CD14-positive monocyte (primary cell): ENCODE measurements at regions of chr5 and their contacts with region 1.

Region 1: DNA sequence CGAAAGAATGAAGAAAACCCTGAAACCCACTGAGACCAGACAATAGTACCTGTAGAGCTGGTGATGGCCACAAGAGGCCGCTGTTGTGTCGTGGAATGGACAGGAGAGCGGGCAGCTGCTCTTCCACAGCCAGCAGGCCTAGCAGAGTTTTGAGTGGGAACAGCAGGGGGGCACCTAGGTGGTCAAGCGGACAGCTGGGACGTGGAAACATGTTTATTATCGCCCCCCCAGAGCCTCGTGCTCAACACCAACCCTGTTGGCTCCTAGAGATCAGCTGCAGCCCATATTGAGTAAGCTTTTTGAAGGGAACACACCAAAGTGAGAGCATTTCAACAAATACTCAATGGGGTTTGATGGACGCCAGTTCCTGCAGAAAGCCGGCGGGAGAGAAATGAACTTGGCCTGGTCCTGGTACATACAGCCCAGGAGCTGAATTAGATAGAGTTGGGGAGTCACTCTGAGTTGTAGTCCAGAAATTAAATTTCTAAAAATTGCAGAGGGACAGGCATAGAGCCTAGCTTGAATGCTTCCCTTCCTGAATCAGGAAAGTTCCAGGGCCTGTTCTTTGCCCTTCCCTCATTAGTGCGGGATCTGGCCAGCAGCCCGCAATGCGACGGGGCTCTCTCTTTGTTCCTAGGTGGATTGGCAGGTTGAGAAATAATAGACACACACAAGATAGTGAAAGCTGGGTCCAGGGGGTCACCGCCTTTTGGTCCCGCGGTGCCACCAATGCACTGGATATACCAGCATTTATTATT is 33.8 kb downstream of the MFAP3 start:
- DNase-seq: peak; percentile 59 to 68 (median 67)
- H3K4me3 ChIP-seq: no peak overlapping the region
- H3K4me3 Mint-ChIP-seq: peak overlapping the region; percentile 32 to 54
- H3K27ac ChIP-seq: no peak overlapping the region
- H3K27ac Mint-ChIP-seq: no peak overlapping the region
- H3K4me1 ChIP-seq: peaks cover 4 to 13% of the 10 kb centered on the region in 2 donors
- H3K4me1 Mint-ChIP-seq: peaks cover 14% of the 10 kb centered on the region
- H3K27me3 ChIP-seq: no peaks in the 10 kb centered on the region
- H3K27me3 Mint-ChIP-seq: peaks cover 4 to 17% (median 8%) of the 10 kb centered on the region in 3 donors
- CTCF ChIP-seq: peak; percentile 87

Region 2: GRCh38 chr5:154110716-154111115 is 38.1 kb after region 1 on chr5:
- intact Hi-C with region 1: no loop called
- DNase-seq: no peak
- H3K4me3 ChIP-seq: no peak overlapping the region
- H3K4me3 Mint-ChIP-seq: no peak overlapping the region
- H3K27ac ChIP-seq: no peak overlapping the region
- H3K27ac Mint-ChIP-seq: no peak overlapping the region
- H3K4me1 ChIP-seq: no peaks in the 10 kb centered on the region
- H3K4me1 Mint-ChIP-seq: peaks cover 4% of the 10 kb centered on the region
- H3K27me3 ChIP-seq: no peaks in the 10 kb centered on the region
- H3K27me3 Mint-ChIP-seq: peaks cover 4 to 12% (median 10%) of the 10 kb centered on the region in 3 donors
- CTCF ChIP-seq: no peak

Region 3: DNA sequence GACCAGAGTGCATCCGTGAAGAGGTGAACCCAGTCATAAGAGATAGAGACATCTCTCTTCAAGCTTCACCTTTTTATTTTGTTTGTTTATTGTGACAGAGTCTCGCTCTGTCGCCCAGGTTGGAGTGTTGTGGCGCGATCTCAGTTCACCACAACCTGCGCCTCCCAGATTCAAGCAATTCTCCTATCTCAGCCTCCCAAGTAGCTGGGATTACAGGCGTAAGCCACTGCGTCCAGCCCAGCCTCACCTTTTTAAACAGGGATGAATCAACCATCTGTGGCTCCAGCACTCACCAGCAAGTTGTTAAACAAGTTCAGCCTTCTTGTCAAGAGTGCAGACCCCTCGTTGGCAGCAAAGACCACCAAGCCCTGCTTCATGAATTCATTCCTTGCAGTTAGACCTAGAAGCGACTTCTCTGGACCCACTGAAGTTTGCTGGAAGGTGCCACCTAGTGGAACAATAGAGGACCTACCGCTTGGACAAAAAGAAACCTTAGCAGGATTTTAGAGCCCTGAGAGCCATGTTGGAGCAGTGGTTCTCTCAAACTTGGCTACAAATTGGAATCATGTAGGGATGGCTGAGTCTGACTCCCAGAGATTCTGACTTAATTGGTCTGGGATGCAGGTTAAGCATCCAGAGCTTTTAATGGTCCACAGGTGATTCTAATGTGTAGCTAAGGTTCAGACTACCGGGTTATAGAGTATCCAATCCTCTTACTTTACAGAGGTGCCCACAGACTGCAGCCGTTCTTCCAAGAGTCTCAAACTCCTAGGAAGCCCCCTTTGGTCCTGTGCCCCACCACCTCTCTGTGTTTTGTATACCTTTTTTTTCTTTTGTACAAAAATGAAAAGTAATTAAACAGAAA is 107.5 kb after region 1 on chr5:
- intact Hi-C with region 1: loop called (anchors 2 to 5 kb)
- DNase-seq: peak in 2 of 3 donors; percentile 48 to 64
- H3K4me3 ChIP-seq: no peak overlapping the region
- H3K4me3 Mint-ChIP-seq: no peak overlapping the region
- H3K27ac ChIP-seq: no peak overlapping the region
- H3K27ac Mint-ChIP-seq: peak overlapping the region in 1 of 7 donors; percentile 12
- H3K4me1 ChIP-seq: no peaks in the 10 kb centered on the region
- H3K4me1 Mint-ChIP-seq: peaks cover 8% of the 10 kb centered on the region
- H3K27me3 ChIP-seq: no peaks in the 10 kb centered on the region
- H3K27me3 Mint-ChIP-seq: peaks cover 9 to 16% (median 13%) of the 10 kb centered on the region in 3 donors
- CTCF ChIP-seq: peak; percentile 87